ENCODE measurements at regions of chrX and their contacts with region 1.

Region 1: DNA sequence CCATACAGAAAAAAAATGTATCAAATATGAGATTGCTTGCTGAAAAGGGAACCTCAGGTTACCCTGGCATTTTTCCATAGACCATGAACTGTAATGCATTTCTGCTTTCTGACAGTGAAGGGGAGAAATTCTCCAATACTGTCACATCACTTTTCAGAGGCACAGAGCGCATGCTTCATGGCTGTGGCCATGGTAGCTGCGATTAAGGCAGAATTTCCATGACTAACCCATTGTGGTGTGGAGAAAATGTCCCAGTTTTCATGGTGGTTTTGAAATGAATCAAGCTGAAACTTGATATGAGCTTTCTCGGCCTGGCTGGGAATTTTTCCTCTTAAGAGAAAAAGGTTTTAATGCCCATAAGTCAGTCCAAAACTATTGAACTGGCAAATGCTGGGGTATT is 39.5 kb upstream of the MAP3K15 start:
- DNase-seq: no peak
- H3K4me3 Mint-ChIP-seq: no peak overlapping the region
- H3K27ac Mint-ChIP-seq: peak overlapping the region; percentile 76
- H3K4me1 Mint-ChIP-seq: peaks cover 40% of the 10 kb centered on the region
- H3K27me3 Mint-ChIP-seq: no peaks in the 10 kb centered on the region

Region 2: DNA sequence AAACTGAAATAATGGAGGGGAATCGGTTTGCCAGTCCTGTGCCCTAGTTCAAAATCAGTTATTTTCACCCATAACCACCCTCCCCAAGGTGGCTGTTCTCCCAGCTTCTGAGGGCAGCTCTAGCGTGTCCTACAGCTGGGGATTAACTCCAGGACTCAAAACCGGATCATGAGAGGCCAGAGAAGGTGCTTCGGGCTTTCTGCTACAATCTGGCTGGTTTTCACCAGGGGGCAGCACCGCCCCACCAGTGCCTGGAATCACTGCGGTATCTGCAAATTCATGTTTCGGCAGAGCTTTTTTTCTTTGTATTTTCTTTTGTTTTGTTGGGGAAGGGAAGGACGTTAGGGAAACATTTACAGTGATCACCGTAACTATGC is 182.6 kb before region 1 on chrX:
- intact Hi-C with region 1: no loop called
- DNase-seq: peak; percentile 41
- H3K4me3 Mint-ChIP-seq: peak overlapping the region; percentile 62
- H3K27ac Mint-ChIP-seq: no peak overlapping the region
- H3K4me1 Mint-ChIP-seq: peaks cover 5% of the 10 kb centered on the region
- H3K27me3 Mint-ChIP-seq: no peaks in the 10 kb centered on the region

Region 3: DNA sequence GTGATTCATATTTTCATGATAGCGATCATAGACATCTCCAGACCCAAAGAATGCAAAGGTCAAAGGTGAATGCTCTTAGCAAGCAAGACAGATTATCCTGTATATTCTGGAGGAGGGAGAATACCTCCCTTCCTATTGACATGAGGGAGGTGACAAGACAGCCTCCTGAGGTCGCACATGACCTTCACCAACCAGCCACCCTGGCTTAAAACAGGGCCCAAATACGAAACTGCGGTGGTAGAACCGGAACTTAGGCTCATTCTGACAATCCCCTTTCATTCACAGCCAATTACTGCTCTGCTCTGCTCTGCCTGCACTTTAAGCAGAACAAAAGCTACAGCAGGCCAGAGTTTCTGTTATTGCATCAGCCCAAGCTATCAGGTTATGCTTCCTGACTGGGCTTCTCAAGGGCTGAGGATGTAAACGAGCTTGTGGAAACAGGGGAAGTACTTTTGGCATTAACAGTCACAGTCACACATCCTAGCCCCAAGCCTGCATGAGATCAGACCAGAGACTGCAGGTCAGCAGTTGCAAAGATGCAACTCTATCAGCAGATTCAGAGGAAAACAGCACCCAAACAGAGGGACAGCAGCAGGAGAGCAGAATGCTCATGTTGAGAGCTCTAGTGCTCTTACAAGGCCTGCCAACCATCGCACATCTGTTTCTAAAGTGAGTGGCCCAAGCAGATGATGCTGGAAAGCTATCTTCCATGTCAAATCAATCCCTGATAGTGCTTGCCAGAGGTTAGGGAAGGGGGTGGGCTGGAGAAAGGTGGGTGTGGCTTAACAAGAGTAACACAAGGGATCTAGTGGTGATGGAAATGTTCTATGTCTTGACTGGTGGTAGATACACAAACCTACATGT is 11.8 kb after region 1 on chrX:
- intact Hi-C with region 1: loop called (anchors 1 kb)
- DNase-seq: peak; percentile 8
- H3K4me3 Mint-ChIP-seq: peak overlapping the region; percentile 14
- H3K27ac Mint-ChIP-seq: peak overlapping the region; percentile 91
- H3K4me1 Mint-ChIP-seq: peaks cover 38% of the 10 kb centered on the region
- H3K27me3 Mint-ChIP-seq: no peaks in the 10 kb centered on the region

Region 4: GRCh38 chrX:19571711-19572110 is 16.9 kb after region 1 on chrX:
- intact Hi-C with region 1: loop called (anchors 1 kb)
- DNase-seq: no peak
- H3K4me3 Mint-ChIP-seq: no peak overlapping the region
- H3K27ac Mint-ChIP-seq: peak overlapping the region; percentile 58
- H3K4me1 Mint-ChIP-seq: peaks cover 22% of the 10 kb centered on the region
- H3K27me3 Mint-ChIP-seq: no peaks in the 10 kb centered on the region

Region 5: DNA sequence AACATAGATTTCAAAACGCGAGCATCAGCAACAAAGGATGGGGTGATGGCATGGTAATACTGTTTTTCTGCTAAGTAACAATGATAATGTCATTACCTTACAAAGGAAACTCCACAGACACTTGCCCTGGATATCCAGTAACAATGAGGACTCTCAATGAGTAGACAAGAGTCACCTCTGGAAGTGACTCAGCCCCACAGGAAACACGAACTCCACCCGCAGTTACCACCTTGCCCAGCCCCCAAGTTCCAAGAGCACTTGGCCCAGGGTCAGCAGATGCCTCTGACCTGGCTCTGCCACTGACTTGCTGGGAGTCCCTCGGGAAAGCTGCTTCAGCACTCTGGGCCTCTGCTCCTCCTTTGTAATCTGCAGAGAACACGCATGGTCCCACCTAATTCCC is 70.8 kb after region 1 on chrX:
- intact Hi-C with region 1: loop called (anchors 10 kb)
- DNase-seq: peak; percentile 16
- H3K4me3 Mint-ChIP-seq: no peak overlapping the region
- H3K27ac Mint-ChIP-seq: peak overlapping the region; percentile 92
- H3K4me1 Mint-ChIP-seq: peaks cover 49% of the 10 kb centered on the region
- H3K27me3 Mint-ChIP-seq: no peaks in the 10 kb centered on the region

Region 6: DNA sequence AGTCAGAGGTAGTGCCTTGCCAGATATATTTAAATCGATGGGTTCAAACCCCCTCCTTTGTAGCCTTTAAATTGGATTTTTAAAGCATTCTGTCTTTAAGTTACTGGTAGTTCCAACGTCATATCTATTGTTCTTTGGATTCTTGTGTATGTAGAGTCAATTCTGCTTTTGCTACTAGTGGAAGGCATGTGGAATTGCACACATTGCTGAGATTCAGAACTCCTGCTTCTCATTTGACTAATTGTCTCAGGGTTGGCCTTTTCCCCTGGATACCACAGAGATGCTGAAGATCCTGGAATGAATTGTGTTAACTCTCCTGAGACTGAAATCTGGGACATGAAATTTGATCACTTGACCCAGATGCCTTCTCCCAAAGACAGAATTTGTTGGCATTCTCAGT is 1040.2 kb after region 1 on chrX:
- intact Hi-C with region 1: loop called (anchors 5 kb)
- DNase-seq: no peak
- H3K4me3 Mint-ChIP-seq: no peak overlapping the region
- H3K27ac Mint-ChIP-seq: no peak overlapping the region
- H3K4me1 Mint-ChIP-seq: peaks cover 24% of the 10 kb centered on the region
- H3K27me3 Mint-ChIP-seq: no peaks in the 10 kb centered on the region

Measured in activated T-helper 2 cell treated with anti-CD3 and anti-CD28 coated beads, Interferon-gamma antibody, Interleukin-2, Interleukin-4, amounts not matched to agents 10 μg/mL and 5 μg/mL and 100 μg/mL, durations not matched to agents 14 hours and 24 hours and 36 hours (primary cell).